ENCODE measurements at regions of chr7 and their contacts with region 1.

Region 1: GRCh38 chr7:1065263-1066260 is 21.2 kb downstream of the GPR146 start:
- DNase-seq: peak; percentile 65
- H3K4me3 ChIP-seq: no peak overlapping the region
- H3K27ac ChIP-seq: no peak overlapping the region
- H3K4me1 ChIP-seq: peaks cover 6% of the 10 kb centered on the region
- H3K27me3 ChIP-seq: no peaks in the 10 kb centered on the region
- CTCF ChIP-seq: peak; percentile 91 to 98
- POLR2A ChIP-seq: no peak

Region 2: DNA sequence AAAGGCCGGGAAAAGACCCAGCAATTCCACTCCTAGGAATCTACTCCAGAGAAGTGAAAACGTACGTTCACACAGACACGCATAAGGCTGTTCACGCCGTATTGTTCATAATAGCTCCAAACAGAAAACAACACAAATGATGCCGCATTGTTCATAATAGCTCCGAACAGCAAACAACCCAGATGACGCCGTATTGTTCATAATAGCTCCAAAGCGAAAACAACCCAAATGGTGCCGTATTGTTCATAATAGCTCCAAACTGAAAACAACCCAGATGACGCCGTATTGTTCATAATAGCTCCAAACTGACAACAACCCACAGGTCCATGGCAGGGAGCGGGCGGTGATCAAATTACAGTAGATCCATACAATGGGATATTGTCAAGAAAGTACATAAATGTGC is 424.3 kb before region 1 on chr7:
- CTCF ChIA-PET with region 1: no interaction called
- POLR2A ChIA-PET with region 1: no interaction called
- dilution Hi-C with region 1: no loop called
- intact Hi-C with region 1: no loop called
- DNase-seq: no peak
- H3K4me3 ChIP-seq: no peak overlapping the region
- H3K27ac ChIP-seq: no peak overlapping the region
- H3K4me1 ChIP-seq: no peaks in the 10 kb centered on the region
- H3K27me3 ChIP-seq: no peaks in the 10 kb centered on the region
- CTCF ChIP-seq: no peak
- POLR2A ChIP-seq: no peak

Region 3: GRCh38 chr7:985915-986741 is 79.4 kb before region 1 on chr7:
- CTCF ChIA-PET with region 1: interaction called, 459 read pairs
- POLR2A ChIA-PET with region 1: no interaction called
- dilution Hi-C with region 1: no loop called
- intact Hi-C with region 1: no loop called
- DNase-seq: peak; percentile 28
- H3K4me3 ChIP-seq: no peak overlapping the region
- H3K27ac ChIP-seq: no peak overlapping the region
- H3K4me1 ChIP-seq: peaks cover 2% of the 10 kb centered on the region
- H3K27me3 ChIP-seq: no peaks in the 10 kb centered on the region
- CTCF ChIP-seq: no peak
- POLR2A ChIP-seq: no peak

Region 4: GRCh38 chr7:1020849-1021251 is 44.7 kb before region 1 on chr7:
- CTCF ChIA-PET with region 1: interaction called, 46 read pairs
- POLR2A ChIA-PET with region 1: no interaction called
- dilution Hi-C with region 1: no loop called
- intact Hi-C with region 1: no loop called
- DNase-seq: no peak
- H3K4me3 ChIP-seq: no peak overlapping the region
- H3K27ac ChIP-seq: no peak overlapping the region
- H3K4me1 ChIP-seq: no peaks in the 10 kb centered on the region
- H3K27me3 ChIP-seq: no peaks in the 10 kb centered on the region
- CTCF ChIP-seq: peak; percentile 3 to 16
- POLR2A ChIP-seq: no peak

Region 5: GRCh38 chr7:1044191-1045068 is 21.1 kb before region 1 on chr7 and contains the start of gene GPR146:
- CTCF ChIA-PET with region 1: interaction called, 46 read pairs
- POLR2A ChIA-PET with region 1: no interaction called
- dilution Hi-C with region 1: no loop called
- intact Hi-C with region 1: loop called (anchors 2 kb)
- DNase-seq: peak; percentile 95
- H3K4me3 ChIP-seq: peak within 1 kb of the TSS; percentile 22 to 67 (median 57)
- H3K27ac ChIP-seq: peak within 1 kb of the TSS; percentile 54
- H3K4me1 ChIP-seq: peaks cover 24% of the 10 kb centered on the region
- H3K27me3 ChIP-seq: no peaks in the 10 kb centered on the region
- CTCF ChIP-seq: peak; percentile 58 to 82
- POLR2A ChIP-seq: peak; percentile 33
- total RNA-seq, gene GPR146: 11.7 and 18.5 TPM in 2 replicates

Region 6: GRCh38 chr7:1086588-1087464 is 21.3 kb after region 1 on chr7:
- CTCF ChIA-PET with region 1: interaction called, 13 read pairs
- POLR2A ChIA-PET with region 1: no interaction called
- dilution Hi-C with region 1: no loop called
- intact Hi-C with region 1: no loop called
- DNase-seq: peak; percentile 73
- H3K4me3 ChIP-seq: peak overlapping the region; percentile 7 to 46 (median 36)
- H3K27ac ChIP-seq: peak overlapping the region; percentile 54
- H3K4me1 ChIP-seq: peaks cover 21% of the 10 kb centered on the region
- H3K27me3 ChIP-seq: no peaks in the 10 kb centered on the region
- CTCF ChIP-seq: peak; percentile 85 to 90
- POLR2A ChIP-seq: no peak

Region 7: GRCh38 chr7:1175967-1176851 is 110.6 kb after region 1 on chr7:
- CTCF ChIA-PET with region 1: interaction called, 16 read pairs
- POLR2A ChIA-PET with region 1: no interaction called
- dilution Hi-C with region 1: no loop called
- intact Hi-C with region 1: no loop called
- DNase-seq: peak; percentile 80
- H3K4me3 ChIP-seq: peak overlapping the region in 2 of 3 experiments; percentile 17 to 22
- H3K27ac ChIP-seq: peak overlapping the region; percentile 20
- H3K4me1 ChIP-seq: peaks cover 14% of the 10 kb centered on the region
- H3K27me3 ChIP-seq: no peaks in the 10 kb centered on the region
- CTCF ChIP-seq: peak; percentile 97 to 98
- POLR2A ChIP-seq: no peak